Esophagus muscularis mucosa (tissue), 4 donors: ENCODE measurements at regions of chr9 and their contacts with region 1.

Region 1: GRCh38 chr9:120714088-120714845 is at the start of gene MEGF9:
- DNase-seq: peak; percentile 99
- H3K4me3 ChIP-seq: peak within 1 kb of the TSS; percentile 67 to 91 (median 86)
- H3K27ac ChIP-seq: peak within 1 kb of the TSS; percentile 83 to 87 (median 84)
- H3K4me1 ChIP-seq: peaks cover 12 to 52% (median 49%) of the 10 kb centered on the region in 4 donors
- H3K27me3 ChIP-seq: no peaks in the 10 kb centered on the region
- CTCF ChIP-seq: peak in 1 of 3 experiments; percentile 8
- EP300 ChIP-seq: no peak
- POLR2A ChIP-seq: peak; percentile 59
- total RNA-seq, gene MEGF9: 17.1 to 23.1 (median 18.9) TPM

Region 2: GRCh38 chr9:120619751-120620655 is 94.3 kb before region 1 on chr9:
- intact Hi-C with region 1: loop called (anchors 5 kb)
- DNase-seq: no peak
- H3K4me3 ChIP-seq: no peak overlapping the region
- H3K27ac ChIP-seq: no peak overlapping the region
- H3K4me1 ChIP-seq: peaks cover 0 to 5% (median 4%) of the 10 kb centered on the region in 4 donors
- H3K27me3 ChIP-seq: no peaks in the 10 kb centered on the region
- CTCF ChIP-seq: peak; percentile 75 to 88 (median 82)
- EP300 ChIP-seq: no peak
- POLR2A ChIP-seq: no peak

Region 3: GRCh38 chr9:120792898-120793765 is 78.9 kb after region 1 on chr9 and contains the start of gene FBXW2:
- intact Hi-C with region 1: loop called (anchors 5 kb)
- DNase-seq: peak; percentile 95
- H3K4me3 ChIP-seq: peak within 1 kb of the TSS; percentile 82 to 98 (median 94)
- H3K27ac ChIP-seq: peak within 1 kb of the TSS; percentile 90 to 95 (median 91)
- H3K4me1 ChIP-seq: peaks cover 30 to 48% (median 40%) of the 10 kb centered on the region in 4 donors
- H3K27me3 ChIP-seq: no peaks in the 10 kb centered on the region
- CTCF ChIP-seq: no peak
- EP300 ChIP-seq: no peak
- POLR2A ChIP-seq: peak; percentile 79
- total RNA-seq, gene FBXW2: 36.9 to 55.9 (median 53.2) TPM

Region 4: GRCh38 chr9:121607434-121608248 is 893.4 kb after region 1 on chr9:
- intact Hi-C with region 1: no loop called
- DNase-seq: no peak
- H3K4me3 ChIP-seq: peak overlapping the region in 3 of 4 donors; percentile 12 to 31 (median 20)
- H3K27ac ChIP-seq: peak overlapping the region; percentile 69 to 79 (median 72)
- H3K4me1 ChIP-seq: peaks cover 83 to 100% (median 88%) of the 10 kb centered on the region in 4 donors
- H3K27me3 ChIP-seq: no peaks in the 10 kb centered on the region
- CTCF ChIP-seq: no peak
- EP300 ChIP-seq: peak; percentile 77
- POLR2A ChIP-seq: no peak